ENCODE measurements at regions of chr2 and their contacts with region 1.

Region 1: GRCh38 chr2:143259368-143259958 is 130.2 kb downstream of the ARHGAP15 start:
- DNase-seq: peak; percentile 37
- H3K4me3 ChIP-seq: peak overlapping the region in 1 of 2 experiments; percentile 38; a peak in 1 of 4 replicates
- H3K27ac ChIP-seq: no peak overlapping the region
- H3K4me1 ChIP-seq: no peaks in the 10 kb centered on the region; a peak in 2 of 4 replicates
- H3K27me3 ChIP-seq: no peaks in the 10 kb centered on the region
- CTCF ChIP-seq: peak; percentile 85
- EP300 ChIP-seq: no peak
- RAD21 ChIP-seq: peak; percentile 89

Region 2: DNA sequence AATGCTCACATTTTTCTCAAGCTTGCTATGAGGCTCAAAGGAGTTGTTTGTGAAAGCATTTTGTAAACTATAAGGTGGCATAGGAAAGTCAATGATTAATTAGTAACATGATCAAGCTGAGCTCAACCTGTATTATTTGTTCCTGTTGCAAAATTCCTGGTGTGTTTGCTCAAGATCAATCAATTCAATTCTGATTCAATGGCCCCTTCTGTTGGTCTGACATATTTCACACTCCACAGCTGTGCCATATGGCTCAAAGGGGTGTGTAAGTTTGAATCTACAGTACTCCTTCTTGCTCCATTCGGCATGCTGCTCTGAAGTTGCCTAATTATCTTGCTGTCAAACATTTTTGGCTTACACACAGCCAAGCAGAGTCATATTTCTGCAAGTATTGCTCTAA is 787.1 kb before region 1 on chr2:
- CTCF ChIA-PET with region 1: no interaction called
- POLR2A ChIA-PET with region 1: no interaction called
- DNase-seq: no peak
- H3K4me3 ChIP-seq: no peak overlapping the region
- H3K27ac ChIP-seq: no peak overlapping the region
- H3K4me1 ChIP-seq: no peaks in the 10 kb centered on the region
- H3K27me3 ChIP-seq: no peaks in the 10 kb centered on the region
- CTCF ChIP-seq: no peak
- EP300 ChIP-seq: no peak
- RAD21 ChIP-seq: no peak

Region 3: GRCh38 chr2:143110758-143111428 is 148.6 kb before region 1 on chr2:
- CTCF ChIA-PET with region 1: interaction called, 20 read pairs
- POLR2A ChIA-PET with region 1: no interaction called
- DNase-seq: peak; percentile 38
- H3K4me3 ChIP-seq: no peak overlapping the region; a peak in 1 of 4 replicates
- H3K27ac ChIP-seq: no peak overlapping the region
- H3K4me1 ChIP-seq: no peaks in the 10 kb centered on the region
- H3K27me3 ChIP-seq: no peaks in the 10 kb centered on the region
- CTCF ChIP-seq: peak; percentile 83
- EP300 ChIP-seq: no peak
- RAD21 ChIP-seq: peak; percentile 75

Region 4: GRCh38 chr2:143171532-143172216 is 87.8 kb before region 1 on chr2:
- CTCF ChIA-PET with region 1: interaction called, 26 read pairs
- POLR2A ChIA-PET with region 1: no interaction called
- DNase-seq: no peak
- H3K4me3 ChIP-seq: no peak overlapping the region
- H3K27ac ChIP-seq: no peak overlapping the region
- H3K4me1 ChIP-seq: no peaks in the 10 kb centered on the region
- H3K27me3 ChIP-seq: no peaks in the 10 kb centered on the region
- CTCF ChIP-seq: peak; percentile 45
- EP300 ChIP-seq: no peak
- RAD21 ChIP-seq: peak; percentile 65

Region 5: GRCh38 chr2:143246815-143247744 is 12.4 kb before region 1 on chr2:
- CTCF ChIA-PET with region 1: interaction called, 13 read pairs
- POLR2A ChIA-PET with region 1: no interaction called
- DNase-seq: no peak
- H3K4me3 ChIP-seq: no peak overlapping the region
- H3K27ac ChIP-seq: no peak overlapping the region
- H3K4me1 ChIP-seq: no peaks in the 10 kb centered on the region; a peak in 1 of 4 replicates
- H3K27me3 ChIP-seq: no peaks in the 10 kb centered on the region; the same call in 1 of the 2 replicates
- CTCF ChIP-seq: no peak
- EP300 ChIP-seq: no peak
- RAD21 ChIP-seq: no peak